CD4-positive, alpha-beta T cell (primary cell): ENCODE measurements at regions of chr1 and their contacts with region 1.

Region 1: DNA sequence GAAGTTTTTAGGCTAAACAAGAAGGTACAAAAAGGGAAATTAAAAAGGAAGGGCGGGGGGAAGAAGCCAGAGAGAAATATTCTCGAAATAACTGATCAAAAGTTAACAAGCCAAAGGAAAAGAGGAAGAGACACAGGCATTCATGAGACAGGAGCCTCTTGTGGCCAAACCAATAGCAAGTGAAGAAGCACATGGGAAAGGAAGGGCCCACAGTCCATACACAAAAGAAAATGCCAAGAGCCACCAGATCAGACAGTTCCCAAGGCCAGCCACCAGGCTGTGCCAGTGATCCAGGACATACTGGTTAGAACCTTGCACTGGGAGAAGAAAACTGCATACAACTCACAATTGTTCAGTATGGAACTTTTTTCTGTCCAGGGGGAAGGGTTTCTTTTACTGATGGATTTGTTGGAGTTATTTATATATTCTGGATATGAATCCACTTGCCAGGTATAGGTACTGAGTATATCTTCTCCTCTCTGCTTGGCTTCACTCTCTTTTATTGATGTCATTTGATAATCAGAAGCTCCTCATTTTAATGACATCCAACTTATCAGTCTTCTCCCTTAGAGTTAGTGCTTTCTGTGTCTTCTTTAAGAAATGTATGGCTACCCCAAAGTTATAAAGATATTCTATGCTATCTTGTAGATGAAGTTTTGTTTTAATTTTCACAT is 76.8 kb downstream of the CD46 start:
- DNase-seq: peak; percentile 29 to 87 (median 58)
- ATAC-seq: peak; percentile 22
- H3K4me3 ChIP-seq: no peak overlapping the region
- H3K4me3 Mint-ChIP-seq: no peak overlapping the region
- H3K27ac ChIP-seq: peak overlapping the region in 1 of 2 donors; percentile 7
- H3K27ac Mint-ChIP-seq: peak overlapping the region; percentile 95
- H3K4me1 ChIP-seq: peaks cover 75% of the 10 kb centered on the region
- H3K4me1 Mint-ChIP-seq: peaks cover 96% of the 10 kb centered on the region
- H3K27me3 ChIP-seq: no peaks in the 10 kb centered on the region
- H3K27me3 Mint-ChIP-seq: peaks cover 5% of the 10 kb centered on the region
- CTCF ChIP-seq: peak; percentile 66

Region 2: GRCh38 chr1:207762622-207763021 is 66.0 kb before region 1 on chr1:
- CTCF ChIA-PET with region 1: no interaction called
- POLR2A ChIA-PET with region 1: no interaction called
- intact Hi-C with region 1: no loop called
- DNase-seq: no peak
- ATAC-seq: no peak
- H3K4me3 ChIP-seq: no peak overlapping the region
- H3K4me3 Mint-ChIP-seq: no peak overlapping the region
- H3K27ac ChIP-seq: no peak overlapping the region
- H3K27ac Mint-ChIP-seq: no peak overlapping the region
- H3K4me1 ChIP-seq: no peaks in the 10 kb centered on the region
- H3K4me1 Mint-ChIP-seq: peaks cover 11% of the 10 kb centered on the region
- H3K27me3 ChIP-seq: no peaks in the 10 kb centered on the region
- H3K27me3 Mint-ChIP-seq: no peaks in the 10 kb centered on the region
- CTCF ChIP-seq: no peak

Region 3: DNA sequence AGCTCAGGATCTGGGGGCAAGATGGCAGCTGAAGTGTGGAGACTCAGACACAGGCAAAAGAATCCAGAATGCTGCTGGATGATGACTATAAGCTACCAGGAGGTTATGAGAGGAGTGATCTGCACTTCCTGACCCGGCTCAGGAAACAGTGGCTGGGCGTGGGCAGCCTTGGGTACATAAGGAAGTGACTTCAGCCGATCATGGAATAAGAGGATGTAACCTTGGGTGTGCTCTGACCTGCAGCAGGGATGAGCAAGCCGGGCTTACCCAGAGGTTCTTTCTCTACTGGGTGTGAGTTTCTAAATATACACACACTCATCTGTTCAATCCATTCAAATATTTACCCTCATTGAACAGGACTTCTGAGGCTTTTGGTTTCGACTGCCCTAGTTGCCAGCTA is 19.6 kb after region 1 on chr1:
- CTCF ChIA-PET with region 1: interaction called, 4 read pairs
- POLR2A ChIA-PET with region 1: interaction called, 15 read pairs
- intact Hi-C with region 1: loop called in 1 of 2 experiments (anchors 2 kb)
- DNase-seq: peak in 4 of 14 experiments; percentile 49 to 75 (median 62)
- ATAC-seq: peak; percentile 63
- H3K4me3 ChIP-seq: no peak overlapping the region
- H3K4me3 Mint-ChIP-seq: peak overlapping the region; percentile 42
- H3K27ac ChIP-seq: no peak overlapping the region
- H3K27ac Mint-ChIP-seq: peak overlapping the region; percentile 61
- H3K4me1 ChIP-seq: peaks cover 72% of the 10 kb centered on the region
- H3K4me1 Mint-ChIP-seq: peaks cover 96% of the 10 kb centered on the region
- H3K27me3 ChIP-seq: no peaks in the 10 kb centered on the region
- H3K27me3 Mint-ChIP-seq: no peaks in the 10 kb centered on the region
- CTCF ChIP-seq: no peak

Region 4: DNA sequence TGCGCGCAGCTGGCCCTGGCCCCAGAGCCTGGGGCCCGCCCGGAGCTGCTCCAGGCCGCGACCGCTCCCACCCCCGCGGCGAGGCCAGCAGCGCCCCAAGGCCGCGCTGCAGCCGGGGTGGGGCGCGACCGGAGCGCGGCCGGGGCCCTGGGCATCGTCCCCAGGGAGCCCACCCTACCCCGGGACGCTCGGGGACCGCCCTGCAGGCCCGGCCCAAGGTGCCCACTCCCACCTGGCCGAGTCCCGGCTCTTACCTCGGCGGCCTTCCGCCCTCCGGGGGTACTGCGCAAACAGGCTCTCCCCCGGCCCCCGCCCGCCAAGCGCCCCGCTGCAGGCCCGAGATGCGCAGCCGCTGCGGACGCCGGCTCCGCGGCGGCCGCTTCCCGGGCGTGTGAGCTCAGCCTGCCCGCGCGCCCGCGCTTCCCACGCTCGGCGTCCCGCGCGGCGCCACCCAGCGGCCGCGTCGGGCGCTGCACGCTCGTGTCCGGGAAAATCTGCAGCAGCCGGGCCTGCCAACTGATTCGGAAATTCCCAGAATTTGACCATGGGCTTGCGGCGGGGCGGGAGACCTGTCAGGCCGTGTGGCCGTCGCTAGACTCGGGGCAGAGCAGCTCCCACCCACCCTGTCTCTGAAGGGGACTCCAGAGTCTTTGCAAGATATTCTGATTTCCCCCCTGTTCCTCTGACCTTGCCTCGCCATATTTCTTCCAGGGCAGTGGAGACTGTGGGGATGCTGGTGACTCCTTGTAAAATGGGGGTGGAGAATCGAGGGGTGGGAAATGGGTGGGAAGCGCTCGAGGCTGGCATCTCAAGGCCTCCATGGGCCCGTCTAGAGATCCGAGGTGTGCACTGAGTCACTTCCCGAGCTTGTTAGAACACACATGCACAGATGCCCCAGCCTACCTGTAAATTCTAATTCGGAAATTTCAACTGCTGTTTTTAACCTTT is 40.4 kb after region 1 on chr1:
- CTCF ChIA-PET with region 1: interaction called, 131 read pairs
- POLR2A ChIA-PET with region 1: interaction called, 158 read pairs
- intact Hi-C with region 1: loop called (anchors 1 kb)
- DNase-seq: peak; percentile 43 to 92 (median 67)
- ATAC-seq: peak; percentile 63
- H3K4me3 ChIP-seq: peak overlapping the region; percentile 98
- H3K4me3 Mint-ChIP-seq: peak overlapping the region; percentile 95
- H3K27ac ChIP-seq: peak overlapping the region; percentile 74 to 89
- H3K27ac Mint-ChIP-seq: peak overlapping the region; percentile 95
- H3K4me1 ChIP-seq: peaks cover 87% of the 10 kb centered on the region
- H3K4me1 Mint-ChIP-seq: peaks cover 85% of the 10 kb centered on the region
- H3K27me3 ChIP-seq: no peaks in the 10 kb centered on the region
- H3K27me3 Mint-ChIP-seq: no peaks in the 10 kb centered on the region
- CTCF ChIP-seq: peak; percentile 60

Region 5: DNA sequence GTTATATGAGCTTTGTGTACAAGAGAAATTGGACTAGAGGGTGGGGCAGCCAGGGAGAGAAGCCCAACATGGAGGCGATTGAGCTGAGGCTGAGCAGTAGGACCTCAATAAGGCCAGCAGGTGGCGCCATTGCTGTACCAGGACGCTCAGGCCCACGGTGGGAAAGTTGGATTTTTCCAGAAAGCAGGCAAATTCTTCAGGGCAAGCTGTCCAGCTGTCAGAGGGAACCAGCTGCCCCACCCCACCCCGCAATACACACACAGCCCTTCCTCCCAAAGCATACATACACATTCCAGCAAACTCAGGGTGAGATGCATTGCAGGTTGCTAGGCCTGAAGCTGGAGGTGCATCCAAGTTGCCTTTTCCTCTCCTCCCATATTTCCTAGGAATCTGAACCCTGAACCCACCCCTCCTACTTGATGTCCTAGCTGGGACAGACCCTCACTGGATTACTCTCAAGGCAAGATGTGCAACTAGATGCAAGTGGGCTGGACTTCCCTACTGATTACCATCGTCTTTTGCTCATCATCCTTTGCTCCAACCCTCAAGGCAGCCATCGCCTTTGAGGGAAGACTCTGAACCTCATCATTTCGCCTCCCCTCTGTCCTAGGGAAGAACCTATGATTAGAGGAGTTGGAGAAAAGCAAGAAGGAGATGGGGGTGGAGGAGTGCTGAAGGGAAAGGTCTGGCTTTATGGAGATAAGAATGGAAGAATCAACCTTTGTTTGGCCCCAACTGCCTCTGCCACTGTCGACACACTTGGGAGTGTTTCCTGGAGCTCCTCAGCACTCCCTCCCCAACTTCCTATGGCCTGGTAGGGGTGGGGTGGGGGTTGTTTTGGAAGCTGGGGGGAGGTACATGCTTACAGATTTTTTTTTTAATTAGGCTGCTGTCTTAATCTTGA is 56.8 kb after region 1 on chr1:
- CTCF ChIA-PET with region 1: interaction called, 19 read pairs
- POLR2A ChIA-PET with region 1: interaction called, 45 read pairs
- intact Hi-C with region 1: no loop called
- DNase-seq: peak; percentile 54 to 89 (median 62)
- ATAC-seq: peak; percentile 78
- H3K4me3 ChIP-seq: no peak overlapping the region
- H3K4me3 Mint-ChIP-seq: peak overlapping the region; percentile 76
- H3K27ac ChIP-seq: no peak overlapping the region
- H3K27ac Mint-ChIP-seq: peak overlapping the region; percentile 92
- H3K4me1 ChIP-seq: peaks cover 32% of the 10 kb centered on the region
- H3K4me1 Mint-ChIP-seq: peaks cover 38% of the 10 kb centered on the region
- H3K27me3 ChIP-seq: no peaks in the 10 kb centered on the region
- H3K27me3 Mint-ChIP-seq: peaks cover 5% of the 10 kb centered on the region
- CTCF ChIP-seq: peak; percentile 98